A549 (cell line): ENCODE measurements at regions of chr19 and their contacts with region 1.

Region 1: GRCh38 chr19:3163230-3163886 is 15.2 kb upstream of the S1PR4 start:
- DNase-seq: peak; percentile 60 to 84
- ATAC-seq: peak; percentile 95 to 97
- H3K4me3 ChIP-seq: no peak overlapping the region
- H3K27ac ChIP-seq: peak overlapping the region in 1 of 2 experiments; percentile 64; a peak in 2 of 6 replicates
- H3K4me1 ChIP-seq: peaks cover 9% of the 10 kb centered on the region; the same call in 1 of the 3 replicates
- CTCF ChIP-seq: peak; percentile 83
- EP300 ChIP-seq: no peak
- POLR2A ChIP-seq: no peak
- RAD21 ChIP-seq: peak; percentile 88 to 93

Region 2: GRCh38 chr19:3098141-3098514 is 65.2 kb before region 1 on chr19:
- CTCF ChIA-PET with region 1: no interaction called
- POLR2A ChIA-PET with region 1: no interaction called
- DNase-seq: no peak
- ATAC-seq: no peak
- H3K4me3 ChIP-seq: no peak overlapping the region
- H3K27ac ChIP-seq: no peak overlapping the region
- H3K4me1 ChIP-seq: peaks cover 10% of the 10 kb centered on the region; the same call in 2 of the 3 replicates
- CTCF ChIP-seq: no peak
- EP300 ChIP-seq: no peak
- POLR2A ChIP-seq: no peak
- RAD21 ChIP-seq: no peak

Region 3: DNA sequence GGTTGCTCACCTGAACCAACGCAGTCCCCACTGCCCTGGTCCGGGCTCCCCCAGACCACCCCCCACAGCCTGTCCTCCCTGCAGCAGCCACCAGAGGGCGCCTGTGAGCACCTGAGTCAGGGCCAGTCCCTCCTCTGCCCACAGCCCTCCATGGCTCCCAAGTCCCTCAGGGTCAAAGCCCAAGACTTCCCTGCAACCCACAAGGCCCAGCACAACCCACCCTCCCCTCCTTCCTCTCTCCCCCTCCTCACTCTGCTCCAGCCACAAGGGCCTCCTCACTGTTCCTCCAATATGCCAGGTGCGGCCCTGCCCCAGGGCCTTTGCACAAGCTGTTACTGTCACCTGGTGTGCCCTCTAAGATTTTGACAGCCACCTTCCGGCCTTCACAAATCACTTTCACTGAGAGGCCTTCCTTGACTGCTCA is 16.7 kb before region 1 on chr19:
- CTCF ChIA-PET with region 1: interaction called, 96 read pairs
- POLR2A ChIA-PET with region 1: no interaction called
- DNase-seq: no peak
- ATAC-seq: peak in 1 of 2 experiments; percentile 67; a peak in 3 of 6 replicates
- H3K4me3 ChIP-seq: no peak overlapping the region
- H3K27ac ChIP-seq: no peak overlapping the region
- H3K4me1 ChIP-seq: peaks cover 13% of the 10 kb centered on the region
- CTCF ChIP-seq: peak; percentile 55
- EP300 ChIP-seq: no peak
- POLR2A ChIP-seq: no peak
- RAD21 ChIP-seq: no peak; a peak in 1 of 5 replicates